ENCODE measurements at regions of chr5 and their contacts with region 1.

Region 1: DNA sequence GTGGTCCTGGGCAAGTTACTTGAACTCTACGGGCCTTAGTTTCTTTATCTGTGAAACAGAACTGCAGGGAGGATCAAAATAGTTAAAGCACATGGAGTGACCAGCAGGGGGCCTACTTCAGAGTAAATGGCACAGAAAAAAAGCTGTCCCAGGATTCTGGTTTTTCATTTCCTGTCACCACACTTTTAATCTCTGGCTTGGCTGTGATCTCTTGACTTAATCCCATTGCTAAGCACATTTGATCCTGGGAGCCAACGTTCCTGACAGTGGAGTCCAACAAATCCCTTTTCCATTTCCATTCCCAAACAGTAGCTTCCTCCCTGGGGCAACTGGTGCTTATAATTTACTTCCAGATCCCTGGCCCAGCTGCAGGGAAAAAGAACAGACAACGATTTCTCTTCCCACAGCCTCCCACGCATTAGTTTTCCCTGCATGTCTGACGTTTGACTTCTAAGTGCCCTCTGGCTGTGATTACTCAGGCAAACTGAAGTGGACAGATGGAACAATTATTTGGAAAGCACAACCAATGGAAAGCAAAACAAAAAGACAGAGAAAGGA is 136.5 kb upstream of the STK32A start:
- DNase-seq: peak in 2 of 10 donors; percentile 19 to 36
- H3K4me3 ChIP-seq: peak overlapping the region in 38 of 59 donors; percentile 0 to 53 (median 20)
- H3K27ac ChIP-seq: peak overlapping the region in 57 of 59 donors; percentile 7 to 87 (median 70)
- H3K27me3 ChIP-seq: no peaks in the 10 kb centered on the region
- CTCF ChIP-seq: peak; percentile 35 to 73 (median 60)

Region 2: DNA sequence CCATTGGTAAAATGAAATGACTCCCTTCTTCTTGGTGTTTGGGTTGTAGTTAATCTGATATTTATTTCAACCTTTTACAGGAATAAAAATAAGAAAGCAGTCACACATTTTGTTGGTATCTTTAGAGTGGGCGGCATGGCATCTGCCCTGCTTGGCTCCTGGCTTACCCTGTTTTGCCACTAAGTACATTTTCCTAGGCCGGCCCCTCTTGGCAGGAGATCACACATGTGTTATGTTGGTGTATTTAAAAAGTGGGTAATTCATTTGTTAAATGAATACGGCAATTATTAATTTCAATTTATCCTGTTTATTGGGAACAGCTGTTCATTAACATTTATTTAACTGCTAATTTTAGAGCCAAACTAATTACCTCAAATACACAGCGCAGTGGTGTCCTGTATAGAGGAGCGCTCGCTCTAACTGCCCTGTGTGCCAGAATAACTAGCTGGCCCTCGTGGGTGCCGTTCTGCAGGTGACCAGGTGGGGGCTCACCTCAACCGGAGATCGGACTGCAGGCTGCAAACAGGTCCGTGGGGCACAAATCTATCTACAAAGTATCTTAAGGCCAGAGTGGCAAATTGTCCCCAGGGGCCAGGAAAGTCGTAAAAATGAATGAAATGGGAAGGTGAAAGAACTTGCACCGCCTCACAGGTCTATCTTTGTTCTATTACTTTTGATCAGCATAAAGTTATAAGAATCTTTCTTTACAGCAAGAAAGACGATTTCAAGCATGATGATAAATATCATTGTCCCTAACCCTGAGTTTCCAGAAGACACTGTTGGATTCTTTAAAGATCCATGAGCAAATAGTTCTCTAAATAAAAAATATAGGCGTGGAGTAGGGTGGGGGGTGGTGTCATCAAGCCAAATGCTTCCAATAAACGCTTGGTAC is 556.1 kb before region 1 on chr5:
- intact Hi-C with region 1: loop called in 1 of 2 experiments (anchors 10 kb)
- DNase-seq: peak; percentile 69 to 86 (median 83)
- H3K4me3 ChIP-seq: peak overlapping the region in 2 of 59 donors; percentile 2 to 21
- H3K27ac ChIP-seq: no peak overlapping the region
- H3K27me3 ChIP-seq: no peaks in the 10 kb centered on the region
- CTCF ChIP-seq: peak; percentile 62 to 92 (median 82)

Region 3: DNA sequence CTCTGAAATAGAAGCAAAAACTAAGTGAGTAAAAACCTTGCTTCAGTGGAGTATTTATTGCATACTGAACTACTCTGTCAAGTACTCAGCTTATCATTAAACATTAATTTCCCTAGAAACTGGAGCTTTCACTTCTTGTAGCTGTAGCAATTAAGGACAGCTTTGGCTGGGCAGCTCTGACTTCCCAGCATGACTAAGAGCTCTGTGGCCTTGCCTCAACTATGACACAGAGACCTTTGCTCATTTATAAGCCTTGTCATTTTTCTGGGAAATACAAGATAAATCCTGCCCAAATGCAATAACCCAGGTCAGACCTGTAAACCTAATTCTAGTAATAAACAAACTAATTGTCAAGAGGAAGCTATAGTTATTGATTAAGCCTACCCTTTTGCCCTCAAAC is 71.1 kb after region 1 on chr5:
- intact Hi-C with region 1: loop called in 1 of 2 experiments (anchors 5 kb)
- DNase-seq: no peak
- H3K4me3 ChIP-seq: no peak overlapping the region
- H3K27ac ChIP-seq: no peak overlapping the region
- H3K27me3 ChIP-seq: no peaks in the 10 kb centered on the region
- CTCF ChIP-seq: no peak